ENCODE measurements at regions of chr16 and their contacts with region 1.

Region 1: GRCh38 chr16:31243734-31244670 is 15.8 kb upstream of the ITGAM start:
- DNase-seq: no peak
- ATAC-seq: peak; percentile 89
- H3K4me3 Mint-ChIP-seq: peak overlapping the region; percentile 1
- H3K27ac Mint-ChIP-seq: peak overlapping the region; percentile 3
- H3K4me1 Mint-ChIP-seq: peaks cover 16% of the 10 kb centered on the region
- H3K27me3 Mint-ChIP-seq: no peaks in the 10 kb centered on the region
- CTCF ChIP-seq: no peak

Region 2: GRCh38 chr16:30858111-30858495 is 385.9 kb before region 1 on chr16:
- CTCF ChIA-PET with region 1: no interaction called
- POLR2A ChIA-PET with region 1: interaction called, 12 read pairs
- intact Hi-C with region 1: no loop called
- DNase-seq: no peak
- ATAC-seq: no peak
- H3K4me3 Mint-ChIP-seq: no peak overlapping the region
- H3K27ac Mint-ChIP-seq: no peak overlapping the region
- H3K4me1 Mint-ChIP-seq: no peaks in the 10 kb centered on the region
- H3K27me3 Mint-ChIP-seq: no peaks in the 10 kb centered on the region
- CTCF ChIP-seq: no peak

Region 3: GRCh38 chr16:31127186-31127585 is 116.8 kb before region 1 on chr16:
- CTCF ChIA-PET with region 1: no interaction called
- POLR2A ChIA-PET with region 1: no interaction called
- intact Hi-C with region 1: no loop called
- DNase-seq: no peak
- ATAC-seq: no peak
- H3K4me3 Mint-ChIP-seq: no peak overlapping the region
- H3K27ac Mint-ChIP-seq: no peak overlapping the region
- H3K4me1 Mint-ChIP-seq: no peaks in the 10 kb centered on the region
- H3K27me3 Mint-ChIP-seq: no peaks in the 10 kb centered on the region
- CTCF ChIP-seq: no peak

Region 4: DNA sequence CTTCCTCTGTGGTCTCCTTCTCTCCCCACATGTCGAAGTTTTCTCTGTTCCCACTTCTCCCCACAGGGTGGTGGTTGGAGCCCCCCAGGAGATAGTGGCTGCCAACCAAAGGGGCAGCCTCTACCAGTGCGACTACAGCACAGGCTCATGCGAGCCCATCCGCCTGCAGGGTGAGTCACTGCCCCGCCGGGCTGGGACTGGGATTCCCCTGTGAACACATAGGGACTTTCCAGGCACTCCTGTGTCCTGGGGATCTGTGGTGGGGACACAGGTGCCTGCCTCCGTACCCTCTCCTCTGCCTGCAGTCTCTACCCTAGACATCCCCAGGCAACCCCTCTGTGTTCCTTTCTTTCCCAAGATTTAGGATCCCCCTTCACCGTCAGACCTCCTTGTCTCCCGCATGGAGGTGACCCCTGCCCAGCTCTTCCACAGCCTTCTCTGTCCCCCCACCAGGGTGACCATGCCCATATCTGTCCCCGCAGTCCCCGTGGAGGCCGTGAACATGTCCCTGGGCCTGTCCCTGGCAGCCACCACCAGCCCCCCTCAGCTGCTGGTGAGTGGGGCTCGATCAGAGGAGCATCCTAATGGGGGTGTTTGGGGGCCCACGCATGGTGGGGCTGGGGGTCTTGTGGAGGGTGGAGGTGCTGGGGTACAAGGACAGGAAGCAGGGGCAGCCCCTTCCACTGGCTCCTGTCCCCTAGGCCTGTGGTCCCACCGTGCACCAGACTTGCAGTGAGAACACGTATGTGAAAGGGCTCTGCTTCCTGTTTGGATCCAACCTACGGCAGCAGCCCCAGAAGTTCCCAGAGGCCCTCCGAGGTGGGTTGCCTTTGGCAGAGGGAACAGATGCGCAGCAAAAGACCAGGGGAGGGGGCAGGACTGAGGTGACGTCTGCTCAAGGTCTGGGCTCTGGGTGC is 21.6 kb after region 1 on chr16:
- CTCF ChIA-PET with region 1: no interaction called
- POLR2A ChIA-PET with region 1: interaction called, 10 read pairs
- intact Hi-C with region 1: no loop called
- DNase-seq: peak; percentile 68
- ATAC-seq: peak; percentile 93
- H3K4me3 Mint-ChIP-seq: peak overlapping the region; percentile 72
- H3K27ac Mint-ChIP-seq: peak overlapping the region; percentile 85
- H3K4me1 Mint-ChIP-seq: peaks cover 76% of the 10 kb centered on the region
- H3K27me3 Mint-ChIP-seq: no peaks in the 10 kb centered on the region
- CTCF ChIP-seq: no peak

Region 5: DNA sequence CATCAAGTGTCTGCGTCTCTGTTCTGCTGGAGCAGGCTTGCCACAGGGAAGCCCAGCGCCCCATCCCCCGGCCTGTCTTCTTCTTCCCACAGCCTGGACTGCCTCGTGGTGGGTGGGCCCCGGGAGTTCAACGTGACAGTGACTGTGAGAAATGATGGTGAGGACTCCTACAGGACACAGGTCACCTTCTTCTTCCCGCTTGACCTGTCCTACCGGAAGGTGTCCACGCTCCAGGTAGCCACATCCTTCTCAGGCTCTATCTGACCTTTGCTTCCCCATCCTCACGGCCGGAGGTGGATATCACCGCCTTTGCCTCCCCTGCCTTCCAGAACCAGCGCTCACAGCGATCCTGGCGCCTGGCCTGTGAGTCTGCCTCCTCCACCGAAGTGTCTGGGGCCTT is 81.2 kb after region 1 on chr16:
- CTCF ChIA-PET with region 1: no interaction called
- POLR2A ChIA-PET with region 1: no interaction called
- intact Hi-C with region 1: no loop called
- DNase-seq: no peak
- ATAC-seq: no peak
- H3K4me3 Mint-ChIP-seq: no peak overlapping the region
- H3K27ac Mint-ChIP-seq: no peak overlapping the region
- H3K4me1 Mint-ChIP-seq: no peaks in the 10 kb centered on the region
- H3K27me3 Mint-ChIP-seq: no peaks in the 10 kb centered on the region
- CTCF ChIP-seq: no peak

Region 6: GRCh38 chr16:31386157-31386984 is 142.4 kb after region 1 on chr16:
- CTCF ChIA-PET with region 1: no interaction called
- POLR2A ChIA-PET with region 1: no interaction called
- intact Hi-C with region 1: no loop called
- DNase-seq: no peak
- ATAC-seq: peak; percentile 46
- H3K4me3 Mint-ChIP-seq: no peak overlapping the region
- H3K27ac Mint-ChIP-seq: no peak overlapping the region
- H3K4me1 Mint-ChIP-seq: peaks cover 11% of the 10 kb centered on the region
- H3K27me3 Mint-ChIP-seq: peaks cover 8% of the 10 kb centered on the region
- CTCF ChIP-seq: no peak